Activated T-helper 1 cell treated with anti-CD3 and anti-CD28 coated beads, Interleukin-12 subunit alpha, Interleukin-12 subunit beta, Interleukin-2, Interleukin-4 antibody, amounts not matched to agents 30 ng/mL and 10 ng/mL and 1 ng/mL, durations not matched to agents 14 hours and 24 hours and 36 hours (primary cell): ENCODE measurements at regions of chr7 and their contacts with region 1.

Region 1: DNA sequence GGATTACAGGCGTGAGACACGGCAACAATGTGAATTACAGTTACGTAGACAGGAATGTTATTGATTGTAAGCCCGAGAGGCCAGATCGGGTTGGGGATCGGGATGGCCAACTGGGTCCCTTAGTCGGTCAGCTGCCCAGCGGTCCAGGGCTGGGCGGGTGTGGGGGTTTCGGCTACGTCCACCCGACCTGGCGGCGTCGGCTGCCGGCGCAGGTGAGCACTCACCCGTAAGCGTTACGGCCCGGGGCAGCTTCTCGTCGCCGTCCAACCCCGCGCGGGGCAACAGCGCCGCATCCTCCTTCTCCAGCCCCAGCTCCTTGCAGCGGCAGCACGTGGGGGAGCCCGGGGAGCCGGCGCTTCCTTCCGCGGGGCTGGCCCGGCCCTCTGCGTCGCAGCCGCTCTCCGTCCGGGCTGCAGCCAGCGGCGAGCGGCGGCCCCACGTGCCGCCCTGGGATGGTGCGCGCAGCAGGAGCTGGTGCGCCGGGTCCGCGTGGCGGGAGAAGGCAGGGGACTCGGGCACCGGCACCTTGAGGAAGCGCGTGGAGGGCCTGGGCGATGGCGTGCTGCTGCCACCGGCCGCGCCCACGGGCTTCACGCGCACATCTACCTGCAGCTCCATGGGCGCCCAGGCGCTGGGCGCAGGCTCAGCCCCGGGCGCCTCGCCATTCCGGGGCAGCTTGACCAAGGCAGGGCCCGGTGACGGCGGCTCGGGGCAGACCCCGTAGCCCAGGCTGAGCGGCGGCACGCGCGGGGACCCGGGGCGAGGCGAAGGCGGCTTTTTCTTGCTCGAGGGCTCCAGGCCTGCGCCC is 607 bp downstream of the KLRG2 start:
- DNase-seq: peak; percentile 10
- H3K4me3 Mint-ChIP-seq: peak overlapping the region; percentile 70
- H3K27ac Mint-ChIP-seq: no peak overlapping the region
- H3K4me1 Mint-ChIP-seq: no peaks in the 10 kb centered on the region
- H3K27me3 Mint-ChIP-seq: peaks cover 48% of the 10 kb centered on the region

Region 2: GRCh38 chr7:139500770-139501138 is 17.9 kb after region 1 on chr7:
- intact Hi-C with region 1: loop called (anchors 1 kb)
- DNase-seq: no peak
- H3K4me3 Mint-ChIP-seq: no peak overlapping the region
- H3K27ac Mint-ChIP-seq: no peak overlapping the region
- H3K4me1 Mint-ChIP-seq: peaks cover 15% of the 10 kb centered on the region
- H3K27me3 Mint-ChIP-seq: peaks cover 21% of the 10 kb centered on the region

Region 3: DNA sequence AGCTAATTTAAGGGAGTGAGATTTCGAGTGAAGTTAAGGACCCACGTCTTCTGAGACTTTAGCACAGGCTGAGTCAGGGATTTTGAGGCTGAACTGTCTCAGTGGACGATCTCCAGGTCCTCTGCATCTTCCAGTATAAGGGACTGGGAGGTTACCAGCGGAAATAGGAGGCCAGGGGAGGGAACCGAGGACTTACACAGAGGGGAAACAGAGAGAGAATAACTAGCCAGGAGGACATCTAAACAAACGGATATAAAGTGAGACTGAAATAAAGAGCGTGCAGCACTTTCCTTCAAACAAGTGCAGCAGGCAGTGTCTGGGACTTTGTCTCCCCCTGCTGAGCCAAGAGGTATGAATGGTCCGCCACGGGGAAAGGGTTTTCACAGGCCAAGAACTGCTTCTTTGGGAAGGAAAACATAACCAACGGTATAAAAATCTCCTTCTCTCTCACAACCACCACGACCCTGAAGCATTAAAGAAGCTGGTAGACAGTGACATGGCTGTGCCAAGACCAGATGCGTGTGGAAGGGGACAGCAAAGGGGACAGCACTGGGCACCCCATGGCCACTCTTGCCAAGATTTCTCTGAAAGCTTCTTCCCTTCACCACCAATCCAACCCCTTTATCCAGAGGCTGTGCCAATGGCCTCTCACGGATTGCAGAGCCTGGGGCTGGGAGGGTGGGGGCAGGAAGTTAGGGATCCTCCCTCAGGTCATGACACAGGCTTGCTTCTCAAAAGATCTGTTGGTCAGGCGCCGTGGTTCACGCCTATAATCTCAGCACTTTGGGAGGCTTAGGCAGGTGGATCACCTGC is 843.5 kb after region 1 on chr7:
- intact Hi-C with region 1: no loop called
- DNase-seq: peak; percentile 36
- H3K4me3 Mint-ChIP-seq: no peak overlapping the region
- H3K27ac Mint-ChIP-seq: no peak overlapping the region
- H3K4me1 Mint-ChIP-seq: no peaks in the 10 kb centered on the region
- H3K27me3 Mint-ChIP-seq: no peaks in the 10 kb centered on the region

Region 4: DNA sequence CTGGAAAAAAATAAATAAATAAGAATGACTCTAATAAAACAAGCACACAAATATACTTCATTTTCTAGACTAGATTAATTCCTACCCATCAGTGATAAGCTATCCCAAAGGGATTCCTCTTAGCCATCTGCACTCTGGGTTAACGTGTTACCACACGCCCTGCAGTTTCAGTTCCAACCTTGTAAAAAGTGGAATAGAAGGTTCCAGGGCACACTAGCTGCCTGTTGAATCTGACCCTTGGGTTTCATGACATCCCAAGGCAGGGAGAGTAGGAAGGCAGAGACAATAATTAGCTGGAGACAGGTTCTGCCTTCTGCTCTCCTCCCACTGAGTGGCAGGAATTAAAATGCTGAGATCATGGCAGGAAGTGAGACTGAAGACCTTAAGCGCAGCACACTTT is 882.0 kb after region 1 on chr7:
- intact Hi-C with region 1: no loop called
- DNase-seq: no peak
- H3K4me3 Mint-ChIP-seq: no peak overlapping the region
- H3K27ac Mint-ChIP-seq: peak overlapping the region; percentile 72
- H3K4me1 Mint-ChIP-seq: peaks cover 32% of the 10 kb centered on the region
- H3K27me3 Mint-ChIP-seq: no peaks in the 10 kb centered on the region